ENCODE measurements at regions of chr10 and their contacts with region 1.

Region 1: GRCh38 chr10:63157845-63158624 is 24.9 kb downstream of the NRBF2 start:
- DNase-seq: peak in 8 of 9 experiments; percentile 13 to 88 (median 48)
- ATAC-seq: peak; percentile 74
- H3K4me3 ChIP-seq: no peak overlapping the region
- H3K4me3 Mint-ChIP-seq: no peak overlapping the region
- H3K27ac ChIP-seq: no peak overlapping the region
- H3K27ac Mint-ChIP-seq: no peak overlapping the region
- H3K4me1 ChIP-seq: no peaks in the 10 kb centered on the region
- H3K4me1 Mint-ChIP-seq: peaks cover 11% of the 10 kb centered on the region
- H3K27me3 ChIP-seq: no peaks in the 10 kb centered on the region
- H3K27me3 Mint-ChIP-seq: no peaks in the 10 kb centered on the region
- CTCF ChIP-seq: peak; percentile 79

Region 2: GRCh38 chr10:62437696-62438095 is 720.3 kb before region 1 on chr10:
- CTCF ChIA-PET with region 1: interaction called, 36 read pairs
- POLR2A ChIA-PET with region 1: no interaction called
- intact Hi-C with region 1: loop called (anchors 1 kb)
- DNase-seq: peak in 3 of 9 experiments; percentile 20 to 72 (median 65)
- ATAC-seq: peak; percentile 66
- H3K4me3 ChIP-seq: no peak overlapping the region
- H3K4me3 Mint-ChIP-seq: no peak overlapping the region
- H3K27ac ChIP-seq: no peak overlapping the region
- H3K27ac Mint-ChIP-seq: no peak overlapping the region
- H3K4me1 ChIP-seq: no peaks in the 10 kb centered on the region
- H3K4me1 Mint-ChIP-seq: no peaks in the 10 kb centered on the region
- H3K27me3 ChIP-seq: no peaks in the 10 kb centered on the region
- H3K27me3 Mint-ChIP-seq: peaks cover 6% of the 10 kb centered on the region
- CTCF ChIP-seq: peak; percentile 95

Region 3: DNA sequence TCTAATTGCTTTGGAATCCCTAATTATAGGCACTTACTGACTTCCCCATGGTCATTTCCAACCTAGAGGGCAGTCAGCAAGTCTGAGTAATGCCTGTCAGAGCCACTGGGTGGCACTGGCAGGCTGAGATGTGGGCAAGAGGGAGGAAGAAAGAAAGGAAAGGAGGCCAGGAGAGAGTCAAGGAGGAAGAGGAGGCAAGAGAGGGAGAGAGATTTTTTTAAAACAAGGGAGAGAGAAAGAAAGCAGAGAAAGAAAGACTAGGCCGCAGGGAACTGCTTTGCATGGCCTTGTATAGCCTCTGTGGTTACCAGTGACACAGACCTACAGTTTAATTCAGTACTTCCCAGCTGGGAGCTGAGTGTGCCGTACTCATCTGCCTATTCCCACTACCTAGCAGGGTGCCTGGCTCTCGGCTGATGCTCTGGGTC is 563.9 kb before region 1 on chr10:
- CTCF ChIA-PET with region 1: interaction called, 13 read pairs
- POLR2A ChIA-PET with region 1: no interaction called
- intact Hi-C with region 1: loop called (anchors 1 kb)
- DNase-seq: peak; percentile 10 to 70 (median 42)
- ATAC-seq: peak; percentile 65
- H3K4me3 ChIP-seq: no peak overlapping the region
- H3K4me3 Mint-ChIP-seq: no peak overlapping the region
- H3K27ac ChIP-seq: no peak overlapping the region
- H3K27ac Mint-ChIP-seq: no peak overlapping the region
- H3K4me1 ChIP-seq: no peaks in the 10 kb centered on the region
- H3K4me1 Mint-ChIP-seq: no peaks in the 10 kb centered on the region
- H3K27me3 ChIP-seq: no peaks in the 10 kb centered on the region
- H3K27me3 Mint-ChIP-seq: no peaks in the 10 kb centered on the region
- CTCF ChIP-seq: peak; percentile 97

Region 4: GRCh38 chr10:63083904-63084689 is 73.9 kb before region 1 on chr10:
- CTCF ChIA-PET with region 1: interaction called, 4 read pairs
- POLR2A ChIA-PET with region 1: no interaction called
- intact Hi-C with region 1: loop called in 1 of 2 experiments (anchors 1 kb)
- DNase-seq: peak in 8 of 9 experiments; percentile 7 to 76 (median 40)
- ATAC-seq: peak; percentile 51
- H3K4me3 ChIP-seq: no peak overlapping the region
- H3K4me3 Mint-ChIP-seq: no peak overlapping the region
- H3K27ac ChIP-seq: no peak overlapping the region
- H3K27ac Mint-ChIP-seq: no peak overlapping the region
- H3K4me1 ChIP-seq: no peaks in the 10 kb centered on the region
- H3K4me1 Mint-ChIP-seq: no peaks in the 10 kb centered on the region
- H3K27me3 ChIP-seq: no peaks in the 10 kb centered on the region
- H3K27me3 Mint-ChIP-seq: peaks cover 9% of the 10 kb centered on the region
- CTCF ChIP-seq: peak; percentile 77

Region 5: GRCh38 chr10:63206997-63207811 is 49.2 kb after region 1 on chr10:
- CTCF ChIA-PET with region 1: no interaction called
- POLR2A ChIA-PET with region 1: no interaction called
- intact Hi-C with region 1: no loop called
- DNase-seq: peak in 2 of 9 experiments; percentile 14 to 34
- ATAC-seq: peak; percentile 20
- H3K4me3 ChIP-seq: no peak overlapping the region
- H3K4me3 Mint-ChIP-seq: peak overlapping the region; percentile 54
- H3K27ac ChIP-seq: peak overlapping the region in 1 of 2 experiments; percentile 36
- H3K27ac Mint-ChIP-seq: peak overlapping the region; percentile 7
- H3K4me1 ChIP-seq: peaks cover 13% of the 10 kb centered on the region
- H3K4me1 Mint-ChIP-seq: peaks cover 65% of the 10 kb centered on the region
- H3K27me3 ChIP-seq: no peaks in the 10 kb centered on the region
- H3K27me3 Mint-ChIP-seq: no peaks in the 10 kb centered on the region
- CTCF ChIP-seq: no peak

Region 6: GRCh38 chr10:63629363-63630084 is 471.5 kb after region 1 on chr10:
- CTCF ChIA-PET with region 1: interaction called, 24 read pairs
- POLR2A ChIA-PET with region 1: no interaction called
- intact Hi-C with region 1: no loop called
- DNase-seq: peak; percentile 52 to 85 (median 80)
- ATAC-seq: peak; percentile 62
- H3K4me3 ChIP-seq: peak overlapping the region; percentile 71 to 81
- H3K4me3 Mint-ChIP-seq: peak overlapping the region; percentile 97
- H3K27ac ChIP-seq: peak overlapping the region; percentile 31 to 45
- H3K27ac Mint-ChIP-seq: peak overlapping the region; percentile 91
- H3K4me1 ChIP-seq: peaks cover 20% of the 10 kb centered on the region
- H3K4me1 Mint-ChIP-seq: peaks cover 29% of the 10 kb centered on the region
- H3K27me3 ChIP-seq: no peaks in the 10 kb centered on the region
- H3K27me3 Mint-ChIP-seq: no peaks in the 10 kb centered on the region
- CTCF ChIP-seq: peak; percentile 87